Sigmoid colon (tissue), 7 donors: ENCODE measurements at regions of chr3 and their contacts with region 1.

Region 1: DNA sequence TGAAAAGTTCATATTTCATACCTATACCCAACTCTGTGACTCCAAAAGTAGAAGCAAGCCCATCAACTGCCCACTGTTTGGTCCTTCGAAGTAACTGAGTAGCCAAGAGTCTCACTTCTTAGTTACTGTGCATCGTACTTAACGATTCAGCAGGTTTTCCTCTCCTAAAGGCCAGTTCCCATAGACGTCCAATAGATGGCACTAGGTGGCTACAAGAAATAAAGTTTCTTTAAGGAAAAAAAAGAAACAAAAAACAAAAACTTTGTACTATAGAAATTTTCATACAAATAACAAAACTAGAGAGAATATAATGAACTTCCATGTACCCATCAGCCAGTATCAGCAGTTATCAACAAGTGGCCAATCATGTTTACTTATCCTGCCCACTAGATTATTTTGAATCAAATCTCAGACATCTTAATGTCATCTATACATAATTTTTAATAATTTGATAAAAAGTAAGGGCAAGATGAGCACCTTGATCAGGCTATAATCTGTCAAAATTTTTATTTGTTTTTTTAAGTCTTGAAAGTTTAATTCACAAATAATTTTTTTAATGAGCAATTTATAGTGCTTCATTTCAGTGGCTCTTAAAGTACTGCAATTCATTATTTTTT is 63.8 kb upstream of the ACP3 start:
- DNase-seq: no peak
- H3K4me3 ChIP-seq: no peak overlapping the region
- H3K27ac ChIP-seq: no peak overlapping the region
- H3K4me1 ChIP-seq: no peaks in the 10 kb centered on the region
- H3K27me3 ChIP-seq: no peaks in the 10 kb centered on the region
- CTCF ChIP-seq: peak in 3 of 4 experiments; percentile 34 to 59 (median 58)
- EP300 ChIP-seq: no peak
- POLR2A ChIP-seq: no peak

Region 2: GRCh38 chr3:132164469-132165092 is 88.8 kb before region 1 on chr3:
- intact Hi-C with region 1: no loop called
- DNase-seq: no peak
- H3K4me3 ChIP-seq: no peak overlapping the region
- H3K27ac ChIP-seq: no peak overlapping the region
- H3K4me1 ChIP-seq: no peaks in the 10 kb centered on the region
- H3K27me3 ChIP-seq: no peaks in the 10 kb centered on the region
- CTCF ChIP-seq: no peak
- EP300 ChIP-seq: no peak
- POLR2A ChIP-seq: no peak

Region 3: GRCh38 chr3:132343018-132343612 is 89.7 kb after region 1 on chr3:
- intact Hi-C with region 1: loop called (anchors 2 kb)
- DNase-seq: no peak
- H3K4me3 ChIP-seq: no peak overlapping the region
- H3K27ac ChIP-seq: no peak overlapping the region
- H3K4me1 ChIP-seq: no peaks in the 10 kb centered on the region
- H3K27me3 ChIP-seq: no peaks in the 10 kb centered on the region
- CTCF ChIP-seq: peak; percentile 30 to 81 (median 80)
- EP300 ChIP-seq: no peak
- POLR2A ChIP-seq: no peak